Endothelial cell of umbilical vein (primary cell): ENCODE measurements at regions of chr12 and their contacts with region 1.

Region 1: GRCh38 chr12:65941388-65941787 is 117.1 kb downstream of the HMGA2 start:
- DNase-seq: peak; percentile 79
- H3K4me3 ChIP-seq: no peak overlapping the region
- H3K27ac ChIP-seq: peak overlapping the region; percentile 82
- H3K4me1 ChIP-seq: peaks cover 62% of the 10 kb centered on the region
- H3K27me3 ChIP-seq: no peaks in the 10 kb centered on the region
- CTCF ChIP-seq: no peak
- POLR2A ChIP-seq: no peak

Region 2: DNA sequence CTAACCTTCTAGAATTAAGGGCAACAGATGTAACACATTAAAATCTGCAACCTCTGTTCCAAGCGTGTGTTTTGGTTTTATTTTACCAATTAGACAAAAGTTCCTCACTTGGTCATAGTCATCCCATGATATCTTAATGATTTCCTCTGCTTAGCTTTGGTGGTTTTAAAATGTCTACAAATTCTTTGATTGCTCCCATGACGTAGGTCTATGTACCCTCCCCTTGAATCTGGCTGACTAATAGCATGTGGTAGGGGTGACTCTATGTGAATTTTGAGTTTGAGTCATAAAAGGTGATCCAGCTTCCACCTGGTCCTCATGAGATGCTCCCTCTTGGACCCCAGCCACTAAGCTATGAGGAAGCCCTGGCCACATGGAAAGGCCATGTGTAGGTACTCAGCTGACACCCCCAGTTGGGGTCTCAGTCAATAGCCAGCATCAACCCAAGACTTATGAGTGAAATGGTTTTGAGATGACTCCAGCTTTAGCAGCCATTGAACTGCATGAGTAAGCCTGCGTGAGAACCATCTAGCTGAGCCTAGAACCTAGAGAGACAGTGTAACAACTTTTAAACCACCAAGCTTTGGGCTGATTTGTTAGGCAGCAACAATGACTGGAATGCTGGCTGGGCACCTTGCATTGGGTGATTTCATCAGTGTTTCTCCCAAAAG is 415.8 kb before region 1 on chr12:
- CTCF ChIA-PET with region 1: no interaction called
- POLR2A ChIA-PET with region 1: no interaction called
- dilution Hi-C with region 1: no loop called
- intact Hi-C with region 1: no loop called
- DNase-seq: no peak
- H3K4me3 ChIP-seq: no peak overlapping the region
- H3K27ac ChIP-seq: no peak overlapping the region
- H3K4me1 ChIP-seq: peaks cover 26% of the 10 kb centered on the region
- H3K27me3 ChIP-seq: no peaks in the 10 kb centered on the region
- CTCF ChIP-seq: no peak
- POLR2A ChIP-seq: no peak

Region 3: GRCh38 chr12:65891987-65892481 is 49.4 kb before region 1 on chr12:
- CTCF ChIA-PET with region 1: interaction called, 14 read pairs
- POLR2A ChIA-PET with region 1: interaction called, 3 read pairs
- dilution Hi-C with region 1: no loop called
- intact Hi-C with region 1: loop called (anchors 1 kb)
- DNase-seq: peak; percentile 91
- H3K4me3 ChIP-seq: peak overlapping the region in 1 of 3 experiments; percentile 17
- H3K27ac ChIP-seq: peak overlapping the region; percentile 96
- H3K4me1 ChIP-seq: peaks cover 45% of the 10 kb centered on the region
- H3K27me3 ChIP-seq: no peaks in the 10 kb centered on the region
- CTCF ChIP-seq: no peak
- POLR2A ChIP-seq: peak; percentile 55

Region 4: DNA sequence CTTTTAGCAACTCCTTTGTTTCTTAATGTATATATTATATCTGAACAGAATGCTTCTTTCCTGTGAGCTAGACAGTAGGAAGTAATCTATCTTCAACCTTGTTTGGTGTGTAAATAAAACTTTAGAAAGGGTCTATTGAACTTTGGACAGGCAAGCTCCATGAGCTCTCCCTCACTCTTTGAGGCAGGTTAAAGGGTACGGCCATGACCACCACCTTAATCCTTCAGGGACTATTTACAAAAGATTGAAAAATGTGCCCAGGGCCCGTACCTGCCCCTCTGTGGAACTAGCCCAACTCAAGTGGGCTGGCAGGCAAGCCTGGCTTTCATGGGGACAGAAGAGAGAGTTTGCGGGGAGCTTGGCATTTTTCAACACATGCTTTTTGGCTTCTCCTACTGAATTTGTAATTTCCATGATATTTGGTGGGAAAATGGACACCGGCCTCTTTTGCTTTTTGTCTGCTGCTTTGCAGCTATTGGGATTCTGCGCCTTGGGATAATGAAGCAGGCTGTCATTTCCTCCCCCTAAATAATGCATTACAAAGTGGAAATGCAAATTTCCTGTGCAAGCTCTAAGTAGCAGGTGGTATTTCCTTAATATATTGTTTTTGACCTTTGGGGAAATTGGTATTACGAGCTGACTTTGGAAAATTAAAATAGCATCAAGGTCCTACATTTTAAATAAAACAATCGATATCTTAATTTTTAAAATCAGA is 11.1 kb before region 1 on chr12:
- CTCF ChIA-PET with region 1: interaction called, 19 read pairs
- POLR2A ChIA-PET with region 1: no interaction called
- dilution Hi-C with region 1: no loop called
- intact Hi-C with region 1: no loop called
- DNase-seq: peak; percentile 48
- H3K4me3 ChIP-seq: peak overlapping the region in 1 of 3 experiments; percentile 30
- H3K27ac ChIP-seq: peak overlapping the region; percentile 79
- H3K4me1 ChIP-seq: peaks cover 79% of the 10 kb centered on the region
- H3K27me3 ChIP-seq: no peaks in the 10 kb centered on the region
- CTCF ChIP-seq: no peak
- POLR2A ChIP-seq: no peak

Region 5: DNA sequence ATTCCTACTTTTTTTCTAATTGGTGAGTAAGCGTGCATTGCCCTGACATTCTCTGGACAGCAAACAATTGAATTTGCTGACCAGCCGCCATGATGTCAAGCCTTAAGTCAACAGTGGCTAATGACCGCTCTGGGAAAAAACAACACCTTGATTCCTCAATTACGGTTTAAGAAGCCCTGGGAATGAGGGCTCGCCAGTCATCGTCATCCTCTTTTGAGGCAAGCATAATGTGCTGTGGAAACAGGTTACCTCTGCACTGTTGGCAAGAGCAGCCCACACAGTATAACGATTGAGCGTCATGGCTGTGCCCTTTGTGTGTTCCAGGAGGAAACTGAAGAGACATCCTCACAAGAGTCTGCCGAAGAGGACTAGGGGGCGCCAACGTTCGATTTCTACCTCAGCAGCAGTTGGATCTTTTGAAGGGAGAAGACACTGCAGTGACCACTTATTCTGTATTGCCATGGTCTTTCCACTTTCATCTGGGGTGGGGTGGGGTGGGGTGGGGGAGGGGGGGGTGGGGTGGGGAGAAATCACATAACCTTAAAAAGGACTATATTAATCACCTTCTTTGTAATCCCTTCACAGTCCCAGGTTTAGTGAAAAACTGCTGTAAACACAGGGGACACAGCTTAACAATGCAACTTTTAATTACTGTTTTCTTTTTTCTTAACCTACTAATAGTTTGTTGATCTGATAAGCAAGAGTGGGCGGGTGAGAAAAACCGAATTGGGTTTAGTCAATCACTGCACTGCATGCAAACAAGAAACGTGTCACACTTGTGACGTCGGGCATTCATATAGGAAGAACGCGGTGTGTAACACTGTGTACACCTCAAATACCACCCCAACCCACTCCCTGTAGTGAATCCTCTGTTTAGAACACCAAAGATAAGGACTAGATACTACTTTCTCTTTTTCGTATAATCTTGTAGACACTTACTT is 21.8 kb after region 1 on chr12:
- CTCF ChIA-PET with region 1: interaction called, 12 read pairs
- POLR2A ChIA-PET with region 1: no interaction called
- dilution Hi-C with region 1: no loop called
- intact Hi-C with region 1: loop called (anchors 1 kb)
- DNase-seq: peak; percentile 85
- H3K4me3 ChIP-seq: no peak overlapping the region
- H3K27ac ChIP-seq: peak overlapping the region; percentile 70
- H3K4me1 ChIP-seq: peaks cover 36% of the 10 kb centered on the region
- H3K27me3 ChIP-seq: no peaks in the 10 kb centered on the region
- CTCF ChIP-seq: peak; percentile 7 to 11
- POLR2A ChIP-seq: no peak